ENCODE measurements at regions of chr10 and their contacts with region 1.

Region 1: DNA sequence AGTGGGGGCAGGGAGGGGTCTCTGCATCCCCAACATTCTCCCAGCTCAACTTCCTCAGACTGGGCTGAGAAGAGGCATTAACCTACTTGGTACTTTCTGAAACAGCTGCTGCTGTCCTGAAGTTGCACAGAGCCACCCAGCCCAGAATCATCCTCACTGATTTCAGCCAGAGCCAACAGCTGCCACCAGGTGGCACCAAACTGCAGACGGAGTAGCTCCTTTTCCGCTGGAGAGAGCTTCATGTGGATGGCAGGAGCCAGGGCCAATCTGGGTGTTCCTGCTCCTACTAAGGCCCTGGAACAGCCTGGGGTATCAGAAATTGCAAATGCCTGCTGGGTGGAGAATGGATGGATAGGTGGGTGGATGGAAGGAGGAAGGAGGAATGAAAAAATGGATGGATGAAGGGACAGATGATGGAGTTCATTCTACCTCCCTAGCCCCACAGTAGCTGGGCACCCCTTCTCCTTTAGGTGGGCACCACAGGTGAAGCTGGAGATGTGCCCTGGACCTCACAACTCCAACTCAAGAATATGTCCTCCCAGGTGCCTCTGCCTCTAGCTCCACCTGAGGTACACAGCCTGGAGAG is 11.8 kb upstream of the DRGX start:
- ATAC-seq: peak; percentile 79 to 99 (median 89)
- H3K4me3 ChIP-seq: no peak overlapping the region
- H3K27ac ChIP-seq: no peak overlapping the region
- H3K4me1 ChIP-seq: no peaks in the 10 kb centered on the region

Region 2: DNA sequence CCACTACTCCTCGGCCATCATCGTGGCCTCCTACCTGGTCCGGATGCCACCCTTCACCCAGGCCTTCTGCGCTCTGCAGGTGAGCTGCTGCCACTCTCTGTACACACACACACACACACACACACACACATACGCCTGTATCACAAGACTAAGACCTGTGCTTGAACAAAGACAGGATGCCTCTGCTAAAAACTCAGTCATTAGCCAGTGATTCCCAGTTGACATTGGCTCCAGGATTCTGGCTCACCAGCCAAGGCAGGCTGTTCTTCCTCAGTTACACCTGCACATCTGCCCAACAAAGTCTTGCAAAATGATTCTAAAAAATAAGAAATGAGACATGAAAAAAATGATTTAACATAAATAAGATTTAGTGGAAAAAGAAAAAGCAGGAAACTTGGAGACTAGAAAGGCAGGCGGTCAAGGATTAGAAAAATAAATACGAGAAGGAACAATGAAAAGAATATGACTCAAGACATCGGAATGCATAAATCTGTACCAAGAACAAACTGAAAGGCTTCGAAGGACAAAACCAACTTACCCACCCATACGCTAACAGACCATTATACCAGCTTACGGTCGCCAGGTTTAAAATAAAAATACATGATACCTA is 460.6 kb before region 1 on chr10:
- in situ Hi-C with region 1: no loop called
- ATAC-seq: no peak
- H3K4me3 ChIP-seq: no peak overlapping the region
- H3K27ac ChIP-seq: no peak overlapping the region
- H3K4me1 ChIP-seq: peaks cover 0 to 7% of the 10 kb centered on the region in 2 donors

Region 3: DNA sequence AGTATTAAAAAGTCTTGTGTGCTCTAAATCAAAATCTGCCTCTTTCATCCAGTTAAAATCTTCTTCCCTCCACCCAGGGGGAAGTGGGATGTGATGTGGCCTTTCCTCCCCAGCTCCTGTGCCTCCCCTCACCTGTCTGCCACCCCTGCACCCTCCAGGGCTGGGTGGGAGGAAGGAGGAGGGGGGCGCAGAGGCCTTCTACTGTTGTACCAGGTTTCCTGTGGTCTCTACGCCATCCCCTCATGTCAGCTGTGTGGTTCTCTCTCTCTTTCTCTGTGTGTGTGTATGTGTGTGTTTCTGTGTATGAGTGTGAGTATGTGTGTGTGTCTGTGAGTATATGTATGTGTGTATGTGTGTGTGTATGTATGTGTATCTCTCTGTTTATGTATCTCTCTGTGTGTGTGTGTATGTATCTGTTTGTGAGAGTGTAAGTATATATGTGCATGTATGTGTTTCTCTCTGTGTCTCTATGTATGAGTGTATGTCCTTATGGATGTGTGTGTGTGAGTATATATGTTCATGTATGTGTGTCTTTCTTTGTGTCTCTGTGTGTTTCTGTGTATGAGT is 154.2 kb before region 1 on chr10:
- in situ Hi-C with region 1: no loop called
- ATAC-seq: no peak
- H3K4me3 ChIP-seq: no peak overlapping the region
- H3K27ac ChIP-seq: no peak overlapping the region
- H3K4me1 ChIP-seq: no peaks in the 10 kb centered on the region

Region 4: GRCh38 chr10:49518982-49519578 is 111.4 kb after region 1 on chr10:
- in situ Hi-C with region 1: loop called in 1 of 9 experiments (anchors 25 kb)
- ATAC-seq: peak in 7 of 8 experiments; percentile 24 to 90 (median 50)
- H3K4me3 ChIP-seq: no peak overlapping the region
- H3K27ac ChIP-seq: no peak overlapping the region
- H3K4me1 ChIP-seq: no peaks in the 10 kb centered on the region

Measured in motor neuron (in vitro differentiated cells).